Gastrocnemius medialis (tissue), 4 donors: ENCODE measurements at regions of chr3 and their contacts with region 1.

Region 1: DNA sequence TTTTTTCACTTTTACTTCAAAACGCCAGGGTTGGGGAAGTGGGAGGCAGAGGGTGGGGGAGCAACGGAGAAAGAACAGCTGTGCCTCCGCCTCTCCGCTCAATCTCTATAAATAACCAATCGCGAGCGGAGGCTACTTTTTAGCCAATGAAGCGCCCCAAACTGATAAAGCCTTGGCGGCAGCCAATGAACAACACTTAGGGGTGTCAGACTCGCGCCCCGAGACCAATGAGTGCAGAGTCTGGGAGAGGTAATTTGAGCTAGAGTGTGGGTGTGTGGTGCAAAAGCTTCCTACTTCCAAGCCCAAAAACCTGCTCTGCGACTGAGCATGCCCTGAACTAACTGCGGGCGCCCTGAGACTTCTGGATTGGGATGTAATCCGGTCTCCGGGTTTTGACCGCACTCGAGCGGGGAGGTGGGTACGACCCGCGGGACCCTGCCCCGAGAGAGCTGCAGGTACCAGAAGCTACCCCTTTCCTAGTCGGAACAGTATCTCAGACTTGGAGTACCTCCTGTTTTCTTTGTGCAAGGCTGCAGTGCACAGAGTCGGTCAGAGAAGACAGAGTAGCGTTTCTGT is 800 bp upstream of the RAP2B start:
- DNase-seq: peak; percentile 92 to 94
- ATAC-seq: peak; percentile 88 to 90
- H3K4me3 ChIP-seq: peak overlapping the region; percentile 76 to 88 (median 81)
- H3K27ac ChIP-seq: peak overlapping the region; percentile 71 to 88 (median 85)
- H3K4me1 ChIP-seq: peaks cover 19% of the 10 kb centered on the region in 2 donors
- H3K27me3 ChIP-seq: no peaks in the 10 kb centered on the region
- CTCF ChIP-seq: no peak
- POLR2A ChIP-seq: peak; percentile 30 to 73

Region 2: GRCh38 chr3:154323891-154324738 is 1162.9 kb after region 1 on chr3 and contains the start of gene DHX36:
- in situ Hi-C with region 1: no loop called
- intact Hi-C with region 1: loop called (anchors 10 kb)
- DNase-seq: peak; percentile 82 to 84
- ATAC-seq: peak; percentile 85 to 93
- H3K4me3 ChIP-seq: peak within 1 kb of the TSS; percentile 86 to 96 (median 89)
- H3K27ac ChIP-seq: peak within 1 kb of the TSS; percentile 89 to 97 (median 93)
- H3K4me1 ChIP-seq: peaks cover 33 to 47% of the 10 kb centered on the region in 2 donors
- H3K27me3 ChIP-seq: no peaks in the 10 kb centered on the region
- CTCF ChIP-seq: no peak
- POLR2A ChIP-seq: peak; percentile 72 to 81
- total RNA-seq, gene DHX36: 59.0 to 211 (median 143) TPM